ENCODE measurements at regions of chr19 and their contacts with region 1.

Region 1: DNA sequence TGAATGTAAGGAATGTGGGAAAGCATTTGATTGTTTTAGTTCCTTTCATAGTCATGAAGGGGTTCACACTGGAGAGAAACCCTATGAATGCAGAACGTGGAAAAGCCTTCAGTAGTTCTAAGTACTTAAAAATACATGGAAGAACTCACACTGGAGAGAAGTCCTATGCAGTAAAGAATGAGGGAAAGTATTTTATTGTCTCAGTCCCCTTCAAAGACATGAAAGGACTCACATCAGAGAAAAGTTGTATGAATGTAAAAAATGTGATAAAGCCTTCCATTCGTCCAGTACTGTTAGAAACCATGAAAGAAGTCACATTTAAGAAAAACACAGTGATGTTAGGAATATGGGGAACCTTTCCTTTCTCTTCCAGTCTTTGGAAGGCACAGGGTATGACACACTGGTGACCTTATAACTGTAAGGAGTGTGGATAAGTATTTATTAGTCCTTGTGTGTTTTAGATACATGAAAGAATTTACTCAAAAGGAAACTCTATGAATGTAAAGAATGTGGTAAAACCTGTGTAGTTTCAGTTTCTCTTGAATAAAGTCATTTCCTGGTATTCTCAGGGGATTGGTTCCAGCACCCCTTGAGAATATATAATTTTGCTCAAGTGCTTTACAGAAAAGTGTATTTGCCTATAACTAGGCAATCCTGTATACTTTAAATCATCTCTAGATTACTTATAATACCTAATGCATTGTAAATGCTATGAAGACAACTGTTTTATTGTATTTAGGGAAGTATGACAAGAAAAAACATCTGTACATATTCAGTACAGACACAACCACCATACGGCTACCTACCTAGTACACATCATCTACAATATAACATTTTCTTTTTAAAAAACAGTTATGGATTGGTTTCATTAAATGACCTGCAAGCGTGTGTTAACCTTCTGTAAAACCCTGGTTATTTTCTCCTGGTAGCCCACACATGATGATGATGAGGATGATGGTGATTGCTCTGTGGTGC is 52.8 kb downstream of the ZNF823 start:
- DNase-seq: no peak
- ATAC-seq: peak; percentile 74
- H3K4me3 Mint-ChIP-seq: no peak overlapping the region
- H3K27ac Mint-ChIP-seq: no peak overlapping the region
- H3K4me1 Mint-ChIP-seq: peaks cover 7% of the 10 kb centered on the region
- H3K27me3 Mint-ChIP-seq: peaks cover 8% of the 10 kb centered on the region

Region 2: DNA sequence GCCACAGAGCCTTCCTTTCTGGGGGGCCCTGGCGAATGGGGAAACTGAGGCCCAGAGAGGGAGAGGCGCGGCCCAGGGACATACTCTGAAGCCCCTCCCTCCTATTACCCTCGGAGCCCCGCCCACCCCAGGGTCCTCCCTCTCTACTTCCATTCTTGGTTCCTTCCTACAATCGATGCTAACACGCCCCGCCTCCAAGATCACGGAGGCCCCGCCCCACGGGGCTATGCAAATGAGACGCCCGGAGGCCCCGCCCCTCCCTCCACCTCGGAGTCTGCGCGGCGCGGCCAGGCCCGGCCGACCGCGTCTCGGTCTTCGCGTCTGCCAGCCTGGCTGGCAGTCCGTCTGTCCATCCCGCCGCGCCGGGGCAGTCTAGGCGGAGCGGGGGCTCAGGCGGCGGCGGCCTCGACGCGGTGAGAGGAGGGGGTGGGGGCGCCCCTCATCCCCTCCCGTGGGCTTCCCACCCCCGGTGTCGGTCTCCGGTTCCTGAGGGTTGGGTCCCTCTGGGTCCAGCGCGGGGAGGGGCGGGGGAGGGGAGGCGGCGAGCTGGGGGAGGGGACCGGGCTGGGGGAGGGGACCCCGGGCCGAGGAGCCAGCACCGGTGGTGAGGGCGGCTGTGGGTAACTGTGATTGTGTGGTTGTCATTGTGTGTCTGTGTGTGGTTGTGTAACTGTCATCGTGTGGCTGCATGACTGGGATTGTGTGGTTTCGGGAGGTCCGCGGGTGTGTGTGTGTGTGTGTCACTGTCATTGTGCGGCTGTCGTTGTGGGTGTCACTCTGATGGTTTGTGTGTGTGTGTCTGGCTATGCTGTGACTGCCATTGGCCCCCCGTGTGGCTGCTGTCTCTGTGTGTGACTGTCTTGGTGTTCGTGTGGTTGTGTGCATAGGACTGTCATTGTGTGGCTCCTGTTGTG is 330.5 kb before region 1 on chr19 and contains the start of gene PLPPR2:
- CTCF ChIA-PET with region 1: no interaction called
- POLR2A ChIA-PET with region 1: no interaction called
- intact Hi-C with region 1: no loop called
- DNase-seq: peak; percentile 92
- ATAC-seq: peak; percentile 95
- H3K4me3 Mint-ChIP-seq: peak within 1 kb of the TSS; percentile 43
- H3K27ac Mint-ChIP-seq: peak within 1 kb of the TSS; percentile 23
- H3K4me1 Mint-ChIP-seq: peaks cover 7% of the 10 kb centered on the region
- H3K27me3 Mint-ChIP-seq: peaks cover 13% of the 10 kb centered on the region
- total RNA-seq, gene PLPPR2: 2.1 to 2.2 TPM

Region 3: GRCh38 chr19:11887611-11888531 is 201.9 kb after region 1 on chr19 and contains the start of gene ZNF69:
- CTCF ChIA-PET with region 1: no interaction called
- POLR2A ChIA-PET with region 1: no interaction called
- intact Hi-C with region 1: no loop called
- DNase-seq: peak; percentile 78
- ATAC-seq: peak; percentile 92
- H3K4me3 Mint-ChIP-seq: peak within 1 kb of the TSS; percentile 83
- H3K27ac Mint-ChIP-seq: peak within 1 kb of the TSS; percentile 84
- H3K4me1 Mint-ChIP-seq: peaks cover 20% of the 10 kb centered on the region
- H3K27me3 Mint-ChIP-seq: no peaks in the 10 kb centered on the region
- total RNA-seq, gene ZNF69: 2.4 to 2.5 TPM

Region 4: GRCh38 chr19:12015753-12016116 is 329.8 kb after region 1 on chr19:
- CTCF ChIA-PET with region 1: no interaction called
- POLR2A ChIA-PET with region 1: no interaction called
- intact Hi-C with region 1: loop called in 1 of 2 experiments (anchors 10 kb)
- DNase-seq: no peak
- ATAC-seq: no peak
- H3K4me3 Mint-ChIP-seq: no peak overlapping the region
- H3K27ac Mint-ChIP-seq: no peak overlapping the region
- H3K4me1 Mint-ChIP-seq: no peaks in the 10 kb centered on the region
- H3K27me3 Mint-ChIP-seq: no peaks in the 10 kb centered on the region

Measured in activated CD4-positive, alpha-beta T cell treated with anti-CD3 and anti-CD28 coated beads for 36 hours (primary cell).